ENCODE measurements at regions of chr14 and their contacts with region 1.

Region 1: GRCh38 chr14:22039938-22040775 is 366.5 kb upstream of the OR4E1 start:
- DNase-seq: peak; percentile 71
- ATAC-seq: peak; percentile 91
- H3K4me3 Mint-ChIP-seq: peak overlapping the region; percentile 76
- H3K27ac Mint-ChIP-seq: peak overlapping the region; percentile 81
- H3K4me1 Mint-ChIP-seq: peaks cover 19% of the 10 kb centered on the region
- H3K27me3 Mint-ChIP-seq: peaks cover 6% of the 10 kb centered on the region

Region 2: DNA sequence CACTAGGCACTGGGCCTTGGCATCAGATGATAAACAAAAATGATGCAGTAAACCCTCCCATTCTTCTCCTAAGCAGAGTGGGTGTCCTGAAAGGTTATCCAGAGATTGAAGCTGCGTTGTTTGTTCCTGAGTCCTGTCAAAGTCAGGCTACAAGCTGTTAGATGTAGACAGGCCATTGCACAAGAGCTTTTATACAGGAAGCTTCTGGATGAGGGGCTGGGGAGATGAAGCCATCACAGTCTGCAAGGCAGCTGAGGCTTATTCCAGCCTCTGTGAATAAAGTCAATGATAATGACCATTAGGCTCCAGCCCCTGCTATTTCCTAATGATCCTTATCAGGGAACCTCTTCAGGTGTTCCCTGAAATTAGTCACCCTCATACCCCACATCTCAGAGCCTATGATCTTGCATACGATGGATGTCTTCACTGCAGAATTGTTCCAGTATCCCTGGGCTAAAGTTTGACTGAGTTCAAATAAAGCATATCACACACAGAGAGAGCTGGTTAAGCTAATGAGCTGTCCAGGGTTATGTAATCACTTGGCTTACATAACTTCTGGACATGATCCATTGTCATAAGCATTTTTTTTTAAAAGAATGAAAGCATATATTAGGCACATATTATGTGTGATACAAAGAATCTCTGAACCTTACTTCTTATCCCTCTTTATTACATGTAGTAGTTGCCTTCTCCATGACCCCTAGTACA is 29.5 kb before region 1 on chr14:
- CTCF ChIA-PET with region 1: interaction called, 11 read pairs
- POLR2A ChIA-PET with region 1: no interaction called
- DNase-seq: no peak
- ATAC-seq: no peak
- H3K4me3 Mint-ChIP-seq: no peak overlapping the region
- H3K27ac Mint-ChIP-seq: no peak overlapping the region
- H3K4me1 Mint-ChIP-seq: peaks cover 66% of the 10 kb centered on the region
- H3K27me3 Mint-ChIP-seq: no peaks in the 10 kb centered on the region

Region 3: GRCh38 chr14:22026527-22026926 is 13.6 kb before region 1 on chr14:
- CTCF ChIA-PET with region 1: interaction called, 12 read pairs
- POLR2A ChIA-PET with region 1: interaction called, 4 read pairs
- DNase-seq: no peak
- ATAC-seq: peak; percentile 58
- H3K4me3 Mint-ChIP-seq: peak overlapping the region; percentile 22
- H3K27ac Mint-ChIP-seq: peak overlapping the region; percentile 61
- H3K4me1 Mint-ChIP-seq: peaks cover 8% of the 10 kb centered on the region
- H3K27me3 Mint-ChIP-seq: peaks cover 7% of the 10 kb centered on the region

Measured in activated CD8-positive, alpha-beta T cell treated with anti-CD3 and anti-CD28 coated beads, Interleukin-2, amount 10 ng/mL, durations not matched to agents 7 days and 5 days (primary cell).